Activated CD4-positive, alpha-beta T cell treated with anti-CD3 and anti-CD28 coated beads, Interleukin-2, amount 10 ng/mL, durations not matched to agents 24 days and 14 days (primary cell): ENCODE measurements at regions of chr20 and their contacts with region 1.

Region 1: DNA sequence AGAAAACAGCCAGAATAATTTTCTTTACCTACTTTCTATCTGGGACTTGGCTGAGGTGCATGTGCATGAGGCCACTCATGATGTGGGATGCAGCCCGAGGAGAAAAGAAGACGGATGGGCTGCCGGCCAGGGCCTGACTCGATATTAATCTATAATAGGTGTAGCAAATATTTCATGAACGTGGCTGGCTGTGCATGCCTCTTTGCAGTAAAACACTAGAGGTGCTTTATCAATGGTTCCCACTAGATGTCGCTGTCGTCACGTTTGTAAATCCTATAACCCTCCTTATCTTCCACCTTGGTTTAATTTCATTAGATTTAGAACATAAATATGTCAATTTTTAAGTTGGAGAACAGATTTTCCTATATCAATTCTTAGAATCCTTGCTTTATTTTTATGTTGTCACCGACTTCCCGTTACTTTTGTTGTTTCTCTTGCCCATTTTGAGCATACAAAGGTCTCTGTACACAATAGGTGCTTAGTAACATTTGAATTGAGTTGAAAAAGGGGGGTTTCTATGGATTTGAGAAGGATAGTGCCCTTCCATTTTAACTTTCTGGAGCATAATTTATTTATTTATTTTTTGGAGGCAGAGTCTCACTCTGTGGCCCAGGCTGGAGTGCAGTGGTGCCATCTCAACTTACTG is 19.6 kb upstream of the FERMT1 start:
- DNase-seq: peak; percentile 81
- H3K4me3 Mint-ChIP-seq: no peak overlapping the region
- H3K27ac Mint-ChIP-seq: no peak overlapping the region
- H3K4me1 Mint-ChIP-seq: no peaks in the 10 kb centered on the region
- H3K27me3 Mint-ChIP-seq: no peaks in the 10 kb centered on the region

Region 2: GRCh38 chr20:7285918-7286556 is 1143.6 kb after region 1 on chr20:
- intact Hi-C with region 1: loop called (anchors 5 kb)
- DNase-seq: peak; percentile 75
- H3K4me3 Mint-ChIP-seq: no peak overlapping the region
- H3K27ac Mint-ChIP-seq: no peak overlapping the region
- H3K4me1 Mint-ChIP-seq: no peaks in the 10 kb centered on the region
- H3K27me3 Mint-ChIP-seq: no peaks in the 10 kb centered on the region

Region 3: GRCh38 chr20:7375905-7376304 is 1233.4 kb after region 1 on chr20:
- intact Hi-C with region 1: loop called (anchors 5 kb)
- DNase-seq: no peak
- H3K4me3 Mint-ChIP-seq: no peak overlapping the region
- H3K27ac Mint-ChIP-seq: no peak overlapping the region
- H3K4me1 Mint-ChIP-seq: no peaks in the 10 kb centered on the region
- H3K27me3 Mint-ChIP-seq: no peaks in the 10 kb centered on the region